ENCODE measurements at regions of chr9 and their contacts with region 1.

Region 1: DNA sequence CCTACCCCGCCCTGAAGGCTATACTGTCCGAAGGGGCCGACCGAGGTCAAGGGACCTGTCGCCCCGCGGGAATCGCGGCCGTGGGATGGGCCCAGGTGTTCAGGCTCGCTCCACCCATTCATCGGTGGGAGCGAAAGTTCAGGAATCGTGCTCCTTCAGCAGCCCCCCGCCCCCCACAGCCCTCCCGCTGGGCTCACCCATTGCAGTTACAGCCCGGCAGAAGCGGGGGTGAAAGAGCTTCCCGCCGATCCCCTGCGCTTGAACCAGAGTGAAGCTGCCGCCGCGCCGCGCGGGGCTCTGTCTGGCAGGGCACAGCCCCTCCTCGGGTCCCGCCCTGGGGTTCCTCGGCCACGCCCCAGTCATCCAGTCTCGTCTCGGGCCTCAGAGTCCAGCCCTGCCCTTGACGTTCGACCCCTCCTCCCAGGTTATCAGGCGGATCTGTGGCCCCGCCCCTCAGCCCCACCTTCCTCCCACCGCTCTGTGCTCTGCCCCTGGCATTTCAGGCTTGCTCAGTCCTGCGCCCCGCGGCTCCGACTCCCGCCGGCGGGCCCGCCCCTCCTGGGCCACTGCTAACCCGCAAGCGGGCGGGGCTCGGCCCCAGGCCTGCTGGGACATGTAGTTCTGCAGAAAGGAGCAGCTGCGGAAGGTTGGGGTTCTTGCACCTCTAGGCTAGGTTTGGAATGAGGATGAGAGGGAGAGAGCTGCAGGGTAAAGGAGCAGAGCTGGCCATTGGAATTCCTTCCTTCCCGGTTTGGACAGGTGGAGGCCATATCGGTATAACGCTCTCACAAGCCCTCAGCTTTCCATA is at the start of gene MYORG:
- DNase-seq: peak; percentile 50
- H3K4me3 ChIP-seq: peak within 1 kb of the TSS; percentile 57
- H3K27me3 ChIP-seq: peaks cover 7% of the 10 kb centered on the region
- CTCF ChIP-seq: no peak
- polyA plus RNA-seq, gene MYORG: 0.21 and 0.22 TPM in 2 replicates

Region 2: DNA sequence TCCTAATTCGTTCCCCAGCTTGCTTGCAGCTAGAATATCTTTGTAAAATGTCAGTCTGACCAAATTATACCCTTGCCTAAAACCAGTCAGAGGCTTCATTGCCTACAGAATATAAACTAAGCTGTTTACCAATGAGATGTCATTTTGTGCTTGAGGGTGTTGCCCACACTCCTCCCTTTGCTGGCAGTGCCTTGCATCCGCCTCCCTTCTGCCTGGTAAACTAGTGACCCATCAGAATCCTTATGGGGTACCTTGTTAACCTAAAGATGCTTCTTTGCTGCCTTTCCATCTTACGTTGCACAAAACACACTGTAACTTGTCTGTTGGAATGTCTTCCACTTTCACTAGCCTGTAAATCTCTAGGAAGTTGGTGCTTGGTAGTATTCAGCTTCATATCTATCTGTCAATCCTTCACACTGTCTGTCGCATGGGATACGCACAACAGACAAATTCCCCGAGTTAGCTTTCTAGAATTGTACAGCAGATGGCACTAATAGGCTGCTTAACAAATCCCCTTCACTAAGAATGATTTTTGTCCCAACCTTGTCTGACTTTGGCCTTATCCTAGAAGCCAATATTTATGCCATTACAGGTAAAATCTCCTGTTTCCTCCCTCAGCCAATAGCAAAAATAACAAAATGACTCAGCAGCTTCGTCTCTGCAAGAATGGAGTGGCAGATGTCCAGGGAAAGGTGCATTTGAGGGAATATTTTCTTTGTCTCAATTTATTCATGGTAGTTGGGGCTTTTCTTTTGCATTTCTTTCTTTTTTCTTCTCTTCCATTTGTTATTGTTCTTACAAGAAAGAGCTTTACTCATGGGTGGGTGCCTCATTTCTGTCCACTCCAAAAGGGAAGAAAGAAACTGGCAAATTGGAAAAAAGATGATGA is 44.5 kb before region 1 on chr9:
- CTCF ChIA-PET with region 1: interaction called, 59 read pairs
- POLR2A ChIA-PET with region 1: no interaction called
- DNase-seq: no peak
- H3K4me3 ChIP-seq: no peak overlapping the region
- H3K27me3 ChIP-seq: no peaks in the 10 kb centered on the region
- CTCF ChIP-seq: peak; percentile 52

Region 3: DNA sequence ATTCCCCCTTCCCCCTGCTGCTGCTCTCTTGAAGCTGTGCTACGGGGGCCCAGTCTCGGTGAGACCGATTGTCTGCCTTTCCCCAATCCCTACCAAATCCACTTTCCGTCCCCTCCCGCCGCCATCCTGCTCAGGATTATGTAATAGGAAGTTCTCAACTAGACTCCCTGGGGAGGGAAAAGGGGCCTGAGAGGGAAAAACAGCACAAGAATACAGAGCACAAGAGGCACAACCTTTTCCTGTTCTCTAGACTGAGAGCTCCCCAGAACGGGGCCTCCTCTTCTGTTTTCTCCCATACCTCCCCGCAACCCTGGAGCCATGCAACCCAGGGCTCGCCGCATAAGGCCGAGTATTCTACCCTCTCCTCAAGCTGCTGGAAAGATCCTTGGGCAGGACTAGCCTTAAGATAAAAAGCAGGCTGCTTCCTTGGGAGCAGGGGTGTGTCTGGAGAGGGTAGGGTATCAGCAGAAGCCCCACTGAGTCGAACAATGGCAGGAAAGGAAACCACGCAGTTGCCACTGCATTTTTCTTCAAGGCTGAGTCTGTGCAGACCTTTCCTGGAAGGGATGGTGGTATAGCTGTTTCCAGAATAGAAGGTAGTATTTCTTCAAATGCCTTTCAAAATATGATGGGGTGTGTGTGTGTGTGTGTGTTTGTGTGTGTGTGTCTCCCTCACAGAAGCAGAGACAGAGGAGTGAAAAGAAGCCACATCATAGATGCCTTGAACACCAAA is 13.0 kb before region 1 on chr9:
- CTCF ChIA-PET with region 1: interaction called, 10 read pairs
- POLR2A ChIA-PET with region 1: no interaction called
- DNase-seq: no peak
- H3K4me3 ChIP-seq: no peak overlapping the region
- H3K27me3 ChIP-seq: no peaks in the 10 kb centered on the region; the same call in 1 of the 2 replicates
- CTCF ChIP-seq: no peak

Region 4: GRCh38 chr9:34392511-34392910 is 15.7 kb after region 1 on chr9:
- CTCF ChIA-PET with region 1: interaction called, 12 read pairs
- POLR2A ChIA-PET with region 1: no interaction called
- DNase-seq: no peak
- H3K4me3 ChIP-seq: no peak overlapping the region
- H3K27me3 ChIP-seq: no peaks in the 10 kb centered on the region
- CTCF ChIP-seq: no peak